Keratinocyte (primary cell): ENCODE measurements at regions of chr17 and their contacts with region 1.

Region 1: DNA sequence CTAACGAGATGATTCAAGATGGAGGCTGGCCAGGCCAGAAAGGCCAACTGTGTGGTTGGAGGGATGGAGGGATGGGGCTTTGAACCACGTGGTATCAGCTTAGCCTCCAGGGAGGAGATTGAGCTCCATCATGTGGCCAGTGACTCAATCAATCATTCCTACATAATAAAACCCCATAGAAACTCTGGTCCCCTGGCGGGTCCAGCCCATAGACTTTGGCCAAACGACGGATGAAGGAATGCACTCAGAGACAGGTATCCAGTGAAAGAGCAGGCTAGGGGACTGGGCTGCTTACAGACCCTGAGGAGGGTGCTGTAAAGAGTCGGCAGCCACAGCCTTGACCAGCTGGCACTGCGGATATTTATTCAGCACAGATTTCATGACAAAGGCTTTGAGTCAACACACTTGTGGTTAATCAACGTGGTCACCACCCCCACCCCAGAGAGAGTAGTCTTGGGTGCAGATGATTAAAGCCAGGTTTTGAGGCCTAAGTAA is 308.7 kb upstream of the TNRC6C start:
- DNase-seq: no peak
- H3K4me3 ChIP-seq: no peak overlapping the region
- H3K27ac ChIP-seq: no peak overlapping the region
- H3K4me1 ChIP-seq: no peaks in the 10 kb centered on the region
- H3K27me3 ChIP-seq: peaks cover 22% of the 10 kb centered on the region
- CTCF ChIP-seq: peak in 2 of 3 experiments; percentile 5 to 34

Region 2: GRCh38 chr17:77690271-77691161 is 40.8 kb after region 1 on chr17:
- dilution Hi-C with region 1: no loop called
- DNase-seq: no peak
- H3K4me3 ChIP-seq: no peak overlapping the region
- H3K27ac ChIP-seq: no peak overlapping the region
- H3K4me1 ChIP-seq: no peaks in the 10 kb centered on the region
- H3K27me3 ChIP-seq: peaks cover 49% of the 10 kb centered on the region
- CTCF ChIP-seq: no peak

Region 3: GRCh38 chr17:77717941-77718668 is 68.3 kb after region 1 on chr17:
- dilution Hi-C with region 1: loop called (anchors 10 kb)
- DNase-seq: no peak
- H3K4me3 ChIP-seq: no peak overlapping the region
- H3K27ac ChIP-seq: no peak overlapping the region
- H3K4me1 ChIP-seq: no peaks in the 10 kb centered on the region
- H3K27me3 ChIP-seq: peaks cover 4% of the 10 kb centered on the region
- CTCF ChIP-seq: no peak